Calu3 (cell line): ENCODE measurements at regions of chr7 and their contacts with region 1.

Region 1: DNA sequence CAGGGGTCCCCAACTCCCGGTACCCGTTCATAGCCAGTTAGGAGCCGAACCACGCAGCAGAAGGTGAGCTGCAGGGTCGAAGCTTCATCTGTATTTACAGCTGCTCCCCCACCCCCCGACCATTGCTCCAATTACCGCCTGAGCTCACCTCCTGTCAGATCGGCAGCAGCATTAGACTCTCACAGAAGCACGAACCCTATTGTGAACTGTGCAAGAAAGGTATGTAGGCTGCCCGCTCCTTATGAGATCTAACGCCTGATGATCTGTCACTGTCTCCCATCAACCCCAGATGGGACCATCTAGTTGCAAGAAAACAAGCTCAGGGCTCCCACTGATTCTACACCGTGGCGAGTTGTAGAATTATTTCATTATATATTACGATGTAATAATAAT is 14.6 kb upstream of the AZGP1 start:
- DNase-seq: no peak
- H3K4me3 Mint-ChIP-seq: no peak overlapping the region
- H3K27ac Mint-ChIP-seq: no peak overlapping the region
- H3K4me1 Mint-ChIP-seq: no peaks in the 10 kb centered on the region
- H3K27me3 Mint-ChIP-seq: peaks cover 37% of the 10 kb centered on the region
- CTCF ChIP-seq: no peak

Region 2: DNA sequence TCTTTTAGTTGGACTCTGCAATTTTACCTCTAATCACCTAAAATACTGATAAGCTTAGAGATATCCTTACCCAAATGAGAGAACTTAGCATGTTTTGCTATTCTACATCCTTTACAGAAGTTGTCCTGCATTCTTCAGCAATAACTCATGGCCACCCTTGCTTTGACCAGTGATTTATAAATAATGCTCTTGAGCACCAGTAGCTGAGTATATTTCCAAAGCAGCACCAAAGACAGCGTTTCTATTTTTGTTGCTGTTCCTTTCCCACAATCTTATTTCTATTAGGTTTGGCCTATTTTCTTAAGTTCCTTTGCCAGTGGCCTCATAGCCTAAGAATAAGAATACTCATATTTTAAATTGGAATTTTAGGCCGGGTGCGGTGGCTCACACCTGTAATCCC is 649.8 kb before region 1 on chr7:
- CTCF ChIA-PET with region 1: interaction called, 10 read pairs
- intact Hi-C with region 1: no loop called
- DNase-seq: no peak
- H3K4me3 Mint-ChIP-seq: no peak overlapping the region
- H3K27ac Mint-ChIP-seq: no peak overlapping the region
- H3K4me1 Mint-ChIP-seq: no peaks in the 10 kb centered on the region
- H3K27me3 Mint-ChIP-seq: no peaks in the 10 kb centered on the region
- CTCF ChIP-seq: no peak

Region 3: DNA sequence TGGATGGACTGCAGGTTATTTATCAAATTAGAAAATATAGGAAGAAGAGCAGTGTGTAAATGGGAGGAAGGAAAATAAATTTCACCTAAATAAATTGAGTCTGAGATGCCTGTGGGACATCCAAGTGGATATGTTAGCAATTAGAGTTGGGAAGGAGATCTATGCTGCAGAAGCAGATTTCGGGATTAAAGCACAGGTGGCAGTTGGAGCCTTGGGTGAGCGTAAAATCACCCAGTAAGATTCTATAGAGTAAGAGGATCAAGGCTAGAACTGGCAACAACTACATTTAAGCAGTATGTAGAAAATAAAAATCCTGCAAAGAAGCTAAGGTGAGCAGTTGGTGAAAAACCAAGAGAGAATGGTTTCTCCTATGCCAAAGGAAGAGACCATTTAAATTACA is 79.5 kb before region 1 on chr7:
- CTCF ChIA-PET with region 1: interaction called, 4 read pairs
- intact Hi-C with region 1: loop called (anchors 1 kb)
- DNase-seq: no peak
- H3K4me3 Mint-ChIP-seq: no peak overlapping the region
- H3K27ac Mint-ChIP-seq: no peak overlapping the region
- H3K4me1 Mint-ChIP-seq: peaks cover 3% of the 10 kb centered on the region
- H3K27me3 Mint-ChIP-seq: no peaks in the 10 kb centered on the region
- CTCF ChIP-seq: no peak

Region 4: GRCh38 chr7:99928994-99929729 is 61.3 kb before region 1 on chr7 and contains the start of gene GJC3:
- CTCF ChIA-PET with region 1: interaction called, 4 read pairs
- intact Hi-C with region 1: loop called (anchors 5 kb)
- DNase-seq: peak; percentile 51
- H3K4me3 Mint-ChIP-seq: peak within 1 kb of the TSS; percentile 67
- H3K27ac Mint-ChIP-seq: peak within 1 kb of the TSS; percentile 35
- H3K4me1 Mint-ChIP-seq: peaks cover 6% of the 10 kb centered on the region
- H3K27me3 Mint-ChIP-seq: peaks cover 51% of the 10 kb centered on the region
- CTCF ChIP-seq: no peak
- total RNA-seq, gene GJC3: not detected in 2 replicates